ENCODE measurements at regions of chr4 and their contacts with region 1.

Region 1: DNA sequence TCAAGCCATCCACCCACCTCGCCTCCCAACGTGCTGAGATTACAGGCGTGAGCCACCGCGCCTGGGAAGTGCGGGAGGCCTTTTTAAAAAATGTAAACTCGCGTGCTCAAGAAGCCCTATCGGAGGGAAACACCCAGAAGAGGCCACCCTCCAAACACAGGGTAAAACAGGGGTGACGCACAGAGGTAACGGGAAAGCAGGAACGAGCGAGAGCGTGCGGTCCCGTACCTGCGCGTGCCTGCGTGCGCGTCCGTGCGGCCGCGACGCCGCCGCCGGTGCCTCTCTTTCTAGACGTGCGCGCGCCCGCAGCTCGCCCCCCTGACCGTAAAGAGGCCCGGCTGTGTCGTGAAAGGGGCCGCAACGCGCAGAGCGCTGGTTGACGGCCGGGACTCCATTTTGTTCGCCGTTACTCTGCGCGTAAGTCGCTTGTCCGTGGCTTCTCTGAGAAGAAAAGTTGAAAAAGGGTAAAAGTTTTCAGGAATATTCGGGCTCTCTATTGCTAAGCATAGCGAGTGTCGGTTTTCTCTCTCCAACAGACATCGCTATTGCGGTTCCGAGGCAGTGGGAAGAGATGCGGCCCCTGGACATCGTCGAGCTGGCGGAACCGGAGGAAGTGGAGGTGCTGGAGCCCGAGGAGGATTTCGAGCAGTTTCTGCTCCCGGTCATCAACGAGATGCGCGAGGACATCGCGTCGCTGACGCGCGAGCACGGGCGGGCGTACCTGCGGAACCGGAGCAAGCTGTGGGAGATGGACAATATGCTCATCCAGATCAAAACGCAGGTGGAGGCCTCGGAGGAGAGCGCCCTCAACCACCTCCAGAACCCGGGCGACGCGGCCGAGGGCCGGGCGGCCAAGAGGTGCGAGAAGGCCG is at the start of gene MRFAP1:
- DNase-seq: peak; percentile 97 to 98
- ATAC-seq: peak; percentile 98
- H3K4me3 ChIP-seq: peak within 1 kb of the TSS; percentile 5 to 81
- H3K27ac ChIP-seq: peak within 1 kb of the TSS; percentile 38 to 89
- H3K4me1 ChIP-seq: peaks cover 0 to 6% of the 10 kb centered on the region in 2 donors
- H3K27me3 ChIP-seq: no peaks in the 10 kb centered on the region
- total RNA-seq, gene MRFAP1: 244 to 263 TPM

Region 2: GRCh38 chr4:5554376-5554775 is 1086.2 kb before region 1 on chr4:
- intact Hi-C with region 1: no loop called
- DNase-seq: no peak
- ATAC-seq: no peak
- H3K4me3 ChIP-seq: no peak overlapping the region
- H3K27ac ChIP-seq: no peak overlapping the region
- H3K4me1 ChIP-seq: no peaks in the 10 kb centered on the region
- H3K27me3 ChIP-seq: no peaks in the 10 kb centered on the region

Region 3: DNA sequence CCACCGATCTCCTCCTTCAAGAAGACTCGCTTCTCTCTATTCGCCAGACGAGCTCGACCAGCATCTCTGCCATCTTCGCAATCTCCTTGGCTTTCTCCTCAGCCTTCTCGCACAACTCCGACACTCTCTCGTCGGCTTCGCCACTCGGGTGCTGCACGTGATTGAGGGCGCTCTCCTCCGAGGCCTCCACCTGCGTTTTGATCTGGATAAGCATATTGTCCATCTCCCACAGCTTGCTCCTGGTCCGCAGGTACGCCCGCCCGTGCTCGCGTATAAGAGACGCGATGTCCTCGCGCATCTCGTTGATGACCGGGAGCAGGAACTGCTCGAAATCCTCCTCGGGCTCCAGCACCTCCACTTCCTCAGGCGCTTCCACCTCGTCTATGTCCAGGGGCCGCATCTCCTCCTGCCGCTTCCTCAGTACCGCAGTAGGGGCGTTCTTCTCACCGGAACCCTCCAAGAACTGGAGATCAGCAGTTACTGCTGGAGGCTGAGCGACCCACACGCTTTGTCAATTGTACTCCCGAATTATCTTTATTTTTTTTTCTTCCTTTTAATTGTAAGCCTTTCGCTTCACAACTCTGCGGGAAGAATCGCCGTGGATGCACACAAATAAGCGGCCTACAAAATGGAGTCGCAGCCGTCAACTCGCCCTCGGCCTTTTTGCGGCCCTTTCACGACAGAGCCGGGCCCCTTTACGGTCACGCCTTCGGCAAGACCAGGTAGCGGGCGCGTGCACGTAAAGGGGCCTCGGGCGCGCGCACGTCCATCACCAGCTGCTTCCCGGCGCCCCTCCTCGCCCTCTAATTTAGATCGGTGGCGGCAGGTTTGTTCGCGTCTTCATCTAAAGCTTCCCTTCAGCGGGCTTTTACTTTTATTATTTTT is 68.9 kb after region 1 on chr4 and contains the start of gene MRFAP1L1:
- intact Hi-C with region 1: loop called (anchors 2 to 5 kb)
- DNase-seq: peak; percentile 98
- ATAC-seq: peak; percentile 98
- H3K4me3 ChIP-seq: peak within 1 kb of the TSS; percentile 54 to 86
- H3K27ac ChIP-seq: peak within 1 kb of the TSS; percentile 17 to 61
- H3K4me1 ChIP-seq: peaks cover 0 to 20% of the 10 kb centered on the region in 2 donors
- H3K27me3 ChIP-seq: no peaks in the 10 kb centered on the region
- total RNA-seq, gene MRFAP1L1: 38.3 to 43.6 TPM